Dorsolateral prefrontal cortex (tissue), 120 donors: ENCODE measurements at regions of chr11 and their contacts with region 1.

Region 1: DNA sequence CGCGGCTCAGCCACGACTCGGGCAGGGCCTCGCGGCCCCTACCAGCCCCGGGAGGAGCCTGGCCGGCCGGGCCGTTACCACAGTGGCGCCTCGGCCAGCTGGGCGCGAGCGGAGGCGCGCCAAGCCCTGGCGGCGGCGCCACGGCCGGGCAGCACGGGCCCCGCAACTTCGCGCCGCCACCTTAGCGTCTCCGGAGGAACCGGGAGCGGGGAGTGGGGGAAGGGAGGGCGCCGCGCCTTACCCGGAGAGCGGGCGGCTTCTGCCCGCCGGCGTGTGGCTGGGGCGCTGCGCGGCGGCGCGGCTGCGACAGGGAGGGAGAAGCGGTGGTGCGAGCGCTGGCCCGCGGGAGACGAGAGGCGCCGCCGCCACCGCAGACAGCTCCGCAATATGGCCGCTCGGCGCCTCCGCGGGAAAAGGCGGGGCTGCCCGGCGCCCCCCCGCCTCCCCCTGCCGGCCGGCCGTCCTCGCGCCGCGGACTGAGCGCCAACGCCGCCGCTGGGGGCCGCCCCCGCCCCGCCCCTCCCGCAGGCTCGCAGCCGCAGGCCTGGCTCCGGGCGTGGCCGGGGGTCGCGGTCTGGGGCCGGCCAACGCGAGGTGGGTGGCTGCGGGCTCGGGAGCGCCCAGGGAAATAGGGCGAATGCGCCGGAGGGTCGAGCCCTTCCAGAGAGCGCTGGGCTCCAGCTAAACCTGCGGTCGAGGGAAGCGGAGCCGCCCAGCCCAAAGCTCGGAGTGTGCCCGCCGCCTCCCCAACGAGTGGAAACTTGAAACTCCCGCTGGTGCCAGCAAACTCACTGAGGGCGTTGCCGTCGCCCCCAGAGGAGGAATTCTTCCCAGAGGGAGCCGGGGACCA is at the start of gene RDX:
- DNase-seq: peak; percentile 43 to 85 (median 65)
- H3K4me3 ChIP-seq: peak within 1 kb of the TSS; percentile 55 to 96 (median 87)
- H3K27ac ChIP-seq: peak within 1 kb of the TSS; percentile 85 to 99 (median 96)
- H3K27me3 ChIP-seq: no peaks in the 10 kb centered on the region
- CTCF ChIP-seq: peak in 12 of 56 donors; percentile 13 to 38 (median 26)
- total RNA-seq, gene RDX: 51.8 to 308 (median 121) TPM

Region 2: GRCh38 chr11:110200241-110200640 is 96.2 kb before region 1 on chr11:
- intact Hi-C with region 1: loop called (anchors 5 kb)
- DNase-seq: no peak
- H3K4me3 ChIP-seq: no peak overlapping the region
- H3K27ac ChIP-seq: no peak overlapping the region
- H3K27me3 ChIP-seq: no peaks in the 10 kb centered on the region
- CTCF ChIP-seq: no peak

Region 3: DNA sequence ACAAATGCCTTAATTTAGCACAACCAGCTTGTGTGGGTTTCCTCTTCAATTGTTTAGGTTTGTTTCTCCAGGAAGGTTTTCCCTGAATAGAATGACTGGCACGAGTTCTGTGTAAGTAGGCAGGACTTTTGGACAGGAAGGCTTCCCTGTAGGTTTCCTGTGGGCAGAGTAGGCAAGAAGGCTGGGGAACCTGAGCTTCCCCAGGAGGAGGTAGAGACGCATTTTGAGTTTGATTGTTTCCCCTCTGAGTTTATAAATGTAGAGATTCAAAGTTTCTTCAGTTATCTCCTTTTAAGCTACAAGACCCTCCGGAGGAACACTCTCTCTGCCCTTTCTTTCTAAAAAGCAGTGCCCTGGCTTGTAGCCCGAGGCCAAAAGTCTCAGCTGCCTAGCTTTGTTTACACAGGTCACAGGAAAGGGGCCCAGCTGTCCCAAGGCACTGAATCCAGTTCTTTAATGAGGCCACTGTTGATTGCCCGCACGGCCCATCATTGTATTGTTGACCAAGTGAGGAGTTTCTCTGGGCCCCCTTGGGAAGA is 66.6 kb after region 1 on chr11:
- intact Hi-C with region 1: loop called (anchors 2 to 10 kb)
- DNase-seq: peak in 2 of 10 donors; percentile 39 to 58
- H3K4me3 ChIP-seq: peak overlapping the region in 24 of 59 donors; percentile 1 to 45 (median 21)
- H3K27ac ChIP-seq: peak overlapping the region; percentile 3 to 94 (median 81)
- H3K27me3 ChIP-seq: no peaks in the 10 kb centered on the region
- CTCF ChIP-seq: peak in 1 of 56 donors; percentile 15

Region 4: GRCh38 chr11:110429731-110430266 is 133.3 kb after region 1 on chr11 and contains the start of gene FDX1:
- intact Hi-C with region 1: loop called (anchors 2 to 5 kb)
- DNase-seq: peak; percentile 60 to 87 (median 74)
- H3K4me3 ChIP-seq: peak within 1 kb of the TSS; percentile 69 to 97 (median 88)
- H3K27ac ChIP-seq: peak within 1 kb of the TSS; percentile 67 to 98 (median 93)
- H3K27me3 ChIP-seq: no peaks in the 10 kb centered on the region
- CTCF ChIP-seq: peak in 55 of 56 donors; percentile 3 to 83 (median 60)
- total RNA-seq, gene FDX1: 7.2 to 13.9 (median 10.5) TPM